ENCODE measurements at regions of chr18 and their contacts with region 1.

Region 1: DNA sequence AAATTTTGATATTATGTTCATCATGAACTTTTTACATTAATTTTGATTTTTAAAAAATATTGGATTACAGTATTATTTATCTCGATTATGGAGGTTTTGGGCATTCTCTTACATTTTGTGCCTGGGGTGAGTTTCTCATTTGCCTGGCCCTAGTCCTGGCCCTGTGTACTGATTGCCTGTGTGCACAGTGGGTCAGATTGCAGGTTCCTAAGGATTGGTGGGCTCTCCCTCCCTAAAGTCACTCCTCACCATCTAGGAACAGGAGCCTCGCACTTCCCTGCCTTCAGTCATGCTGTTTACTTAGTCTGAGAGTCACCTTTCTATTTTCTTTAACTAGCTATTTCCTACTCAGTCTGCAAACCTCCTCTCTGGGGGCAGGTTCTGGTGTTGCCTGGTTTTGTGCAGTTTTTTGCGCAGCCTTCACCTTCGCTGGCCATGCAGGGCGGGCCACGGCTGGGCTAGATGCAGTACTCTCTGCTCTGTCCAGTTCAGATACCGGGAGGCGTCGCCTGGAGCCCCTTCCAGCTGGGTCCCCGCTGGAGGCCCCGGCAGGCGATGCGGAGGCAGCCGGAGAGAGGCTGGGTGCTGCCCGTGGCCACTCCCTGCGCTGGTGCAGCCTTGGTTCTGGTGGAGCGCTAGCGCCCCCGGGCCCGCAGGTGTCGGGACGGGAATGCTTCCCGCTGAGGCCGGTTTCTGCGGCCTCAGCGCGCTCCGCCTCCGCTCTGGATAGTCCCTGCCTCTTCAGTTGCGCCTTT is 23.3 kb upstream of the MC5R start:
- DNase-seq: peak; percentile 81
- H3K4me3 ChIP-seq: peak overlapping the region; percentile 34 to 42 (median 38)
- H3K27ac ChIP-seq: no peak overlapping the region
- H3K4me1 ChIP-seq: peaks cover 18% of the 10 kb centered on the region
- H3K27me3 ChIP-seq: no peaks in the 10 kb centered on the region
- CTCF ChIP-seq: peak; percentile 39 to 79

Region 2: DNA sequence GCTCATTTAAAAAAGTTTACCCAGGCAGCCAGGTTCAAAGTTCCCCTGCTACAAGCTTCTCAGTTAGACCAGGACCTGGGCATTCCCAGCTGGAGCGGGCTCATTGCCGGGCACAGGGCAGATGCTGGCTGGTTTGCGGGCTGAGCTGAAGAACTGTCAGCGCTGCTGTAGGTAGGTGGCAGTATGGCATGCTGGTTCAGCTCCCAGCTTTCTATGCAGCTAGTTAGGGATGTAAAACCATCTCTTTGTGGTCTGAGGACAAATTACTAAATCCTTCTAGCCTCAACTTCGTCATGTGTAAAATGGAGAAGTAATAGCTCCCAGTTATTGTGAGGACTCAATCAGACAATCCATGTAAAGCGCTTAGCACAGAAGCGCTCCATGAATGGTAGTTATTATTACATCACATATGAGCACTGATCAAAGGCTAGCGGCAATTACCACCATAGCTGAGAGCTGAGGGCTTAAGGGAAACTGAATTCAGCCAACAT is 584.5 kb before region 1 on chr18:
- CTCF ChIA-PET with region 1: no interaction called
- dilution Hi-C with region 1: no loop called
- in situ Hi-C with region 1: no loop called
- intact Hi-C with region 1: loop called (anchors 2 kb)
- DNase-seq: peak; percentile 42
- H3K4me3 ChIP-seq: no peak overlapping the region
- H3K27ac ChIP-seq: no peak overlapping the region
- H3K4me1 ChIP-seq: peaks cover 6% of the 10 kb centered on the region
- H3K27me3 ChIP-seq: peaks cover 24% of the 10 kb centered on the region
- CTCF ChIP-seq: peak; percentile 35 to 73

Region 3: GRCh38 chr18:13629841-13630715 is 170.6 kb before region 1 on chr18:
- CTCF ChIA-PET with region 1: no interaction called
- dilution Hi-C with region 1: no loop called
- in situ Hi-C with region 1: no loop called
- intact Hi-C with region 1: loop called (anchors 1 kb)
- DNase-seq: peak; percentile 43
- H3K4me3 ChIP-seq: no peak overlapping the region
- H3K27ac ChIP-seq: no peak overlapping the region
- H3K4me1 ChIP-seq: no peaks in the 10 kb centered on the region
- H3K27me3 ChIP-seq: no peaks in the 10 kb centered on the region
- CTCF ChIP-seq: peak; percentile 61 to 81

Region 4: DNA sequence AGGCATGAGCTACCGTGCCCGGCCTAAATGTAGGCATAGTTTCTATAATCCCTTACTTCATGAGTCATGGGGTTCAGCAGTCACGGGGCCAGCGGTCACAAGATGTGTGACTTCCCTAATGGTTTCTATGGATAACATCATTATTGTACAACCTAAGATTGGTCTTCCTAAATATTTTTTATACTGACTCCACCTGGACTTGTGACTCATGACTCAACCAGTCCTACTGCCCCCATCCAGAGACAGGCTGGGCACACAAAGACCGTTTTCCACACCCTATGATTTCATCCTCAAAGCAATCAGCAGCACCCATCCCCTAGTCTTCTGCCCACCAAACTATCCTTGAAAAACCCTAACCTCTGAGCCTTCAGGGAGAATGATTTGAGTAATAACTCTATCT is 90.2 kb before region 1 on chr18:
- CTCF ChIA-PET with region 1: no interaction called
- dilution Hi-C with region 1: no loop called
- in situ Hi-C with region 1: no loop called
- intact Hi-C with region 1: loop called (anchors 2 kb)
- DNase-seq: peak; percentile 99
- H3K4me3 ChIP-seq: no peak overlapping the region
- H3K27ac ChIP-seq: peak overlapping the region; percentile 98
- H3K4me1 ChIP-seq: peaks cover 20% of the 10 kb centered on the region
- H3K27me3 ChIP-seq: no peaks in the 10 kb centered on the region
- CTCF ChIP-seq: no peak

Region 5: GRCh38 chr18:13756261-13756660 is 44.4 kb before region 1 on chr18:
- CTCF ChIA-PET with region 1: no interaction called
- dilution Hi-C with region 1: no loop called
- in situ Hi-C with region 1: no loop called
- intact Hi-C with region 1: loop called (anchors 5 kb)
- DNase-seq: no peak
- H3K4me3 ChIP-seq: no peak overlapping the region
- H3K27ac ChIP-seq: no peak overlapping the region
- H3K4me1 ChIP-seq: peaks cover 6% of the 10 kb centered on the region
- H3K27me3 ChIP-seq: no peaks in the 10 kb centered on the region
- CTCF ChIP-seq: no peak